Activated CD8-positive, alpha-beta memory T cell treated with anti-CD3 and anti-CD28 coated beads, Interleukin-2, amount 10 ng/mL, durations not matched to agents 7 days and 5 days (primary cell): ENCODE measurements at regions of chr15 and their contacts with region 1.

Region 1: DNA sequence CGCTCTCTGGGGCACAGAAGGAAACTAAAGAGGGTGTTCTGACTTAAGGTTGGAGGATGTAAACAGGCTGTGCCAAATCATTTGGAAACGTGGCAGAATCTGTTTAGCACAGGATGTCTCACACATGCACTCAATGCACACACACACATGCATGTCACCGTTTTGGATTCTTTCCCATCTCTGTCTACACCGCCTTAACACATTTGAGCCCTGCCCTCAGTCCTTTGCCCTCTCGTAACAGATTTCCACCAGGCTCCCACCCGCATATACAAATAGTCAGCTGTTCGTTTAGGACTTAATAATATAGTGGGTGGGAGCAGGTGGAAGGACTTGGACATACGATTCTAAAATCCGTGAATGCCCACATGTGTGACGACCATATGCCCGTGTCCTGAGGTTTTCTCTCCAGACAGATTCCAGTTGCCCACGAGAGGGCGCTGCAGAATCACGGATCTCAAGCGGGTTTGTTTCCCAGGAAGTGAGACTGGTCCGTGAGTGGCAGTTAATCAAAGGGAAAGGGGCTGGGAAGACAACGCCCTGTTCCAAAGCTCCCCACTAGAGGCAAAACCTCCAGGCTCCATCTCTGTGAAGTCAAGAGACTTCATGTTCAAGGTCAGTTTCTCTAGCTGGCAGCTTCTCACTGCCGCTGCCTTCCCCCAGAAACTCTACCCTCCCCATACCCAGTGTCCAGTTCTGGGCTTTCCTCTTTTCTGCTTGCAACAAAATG is 44.5 kb downstream of the NOX5 start:
- DNase-seq: peak; percentile 80
- ATAC-seq: peak; percentile 67
- H3K4me3 Mint-ChIP-seq: no peak overlapping the region
- H3K27ac Mint-ChIP-seq: peak overlapping the region; percentile 35
- H3K4me1 Mint-ChIP-seq: peaks cover 20% of the 10 kb centered on the region
- H3K27me3 Mint-ChIP-seq: peaks cover 8% of the 10 kb centered on the region

Region 2: GRCh38 chr15:68614286-68615035 is 444.5 kb before region 1 on chr15:
- CTCF ChIA-PET with region 1: no interaction called
- DNase-seq: no peak
- ATAC-seq: no peak
- H3K4me3 Mint-ChIP-seq: no peak overlapping the region
- H3K27ac Mint-ChIP-seq: no peak overlapping the region
- H3K4me1 Mint-ChIP-seq: no peaks in the 10 kb centered on the region
- H3K27me3 Mint-ChIP-seq: peaks cover 32% of the 10 kb centered on the region

Region 3: GRCh38 chr15:68679961-68680371 is 379.0 kb before region 1 on chr15:
- CTCF ChIA-PET with region 1: no interaction called
- DNase-seq: no peak
- ATAC-seq: no peak
- H3K4me3 Mint-ChIP-seq: no peak overlapping the region
- H3K27ac Mint-ChIP-seq: no peak overlapping the region
- H3K4me1 Mint-ChIP-seq: no peaks in the 10 kb centered on the region
- H3K27me3 Mint-ChIP-seq: no peaks in the 10 kb centered on the region

Region 4: GRCh38 chr15:69045808-69046207 is 13.2 kb before region 1 on chr15:
- CTCF ChIA-PET with region 1: no interaction called
- DNase-seq: no peak
- ATAC-seq: no peak
- H3K4me3 Mint-ChIP-seq: no peak overlapping the region
- H3K27ac Mint-ChIP-seq: no peak overlapping the region
- H3K4me1 Mint-ChIP-seq: no peaks in the 10 kb centered on the region
- H3K27me3 Mint-ChIP-seq: peaks cover 5% of the 10 kb centered on the region

Region 5: GRCh38 chr15:69096196-69096595 is 37.2 kb after region 1 on chr15:
- CTCF ChIA-PET with region 1: no interaction called
- DNase-seq: no peak
- ATAC-seq: no peak
- H3K4me3 Mint-ChIP-seq: no peak overlapping the region
- H3K27ac Mint-ChIP-seq: no peak overlapping the region
- H3K4me1 Mint-ChIP-seq: no peaks in the 10 kb centered on the region
- H3K27me3 Mint-ChIP-seq: peaks cover 10% of the 10 kb centered on the region

Region 6: DNA sequence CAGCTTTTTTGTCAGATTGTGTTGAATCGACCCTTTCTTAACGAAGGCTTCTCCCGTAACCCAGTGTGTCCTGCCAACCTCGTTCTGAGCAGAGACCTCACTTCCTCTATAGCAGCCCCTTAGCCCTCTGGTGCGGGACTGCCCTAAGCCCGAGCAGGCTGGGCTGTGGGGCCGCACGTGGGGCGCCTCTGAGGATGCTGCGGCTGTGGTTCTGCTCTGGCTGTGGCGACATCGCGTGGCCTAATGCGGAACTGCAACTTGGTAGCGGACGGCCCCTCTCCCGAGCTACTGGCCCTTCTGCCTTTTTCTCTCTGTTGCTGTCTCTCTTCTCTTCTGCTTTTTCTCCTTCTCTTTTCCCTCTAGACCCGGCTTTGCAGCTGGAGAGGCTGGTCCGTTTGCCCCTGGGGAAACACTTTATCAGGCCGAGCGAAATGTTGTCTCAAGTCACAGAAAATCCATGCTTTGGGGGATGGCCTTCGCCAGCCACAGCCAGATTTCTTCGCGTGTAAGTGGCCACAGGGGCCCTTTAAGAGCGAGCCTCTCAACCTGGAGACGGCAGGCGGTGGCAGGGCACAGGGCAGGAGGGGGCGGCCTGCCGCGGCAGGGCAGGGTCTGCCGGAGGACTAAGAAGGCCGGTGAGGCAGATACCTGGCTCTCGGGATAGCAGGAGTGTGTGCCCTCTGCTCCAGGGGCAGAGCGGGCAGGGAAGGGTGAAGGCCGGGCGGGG is 335.7 kb after region 1 on chr15:
- CTCF ChIA-PET with region 1: interaction called, 21 read pairs
- DNase-seq: peak; percentile 83
- ATAC-seq: peak; percentile 89
- H3K4me3 Mint-ChIP-seq: no peak overlapping the region
- H3K27ac Mint-ChIP-seq: no peak overlapping the region
- H3K4me1 Mint-ChIP-seq: peaks cover 9% of the 10 kb centered on the region
- H3K27me3 Mint-ChIP-seq: peaks cover 10% of the 10 kb centered on the region